ENCODE measurements at regions of chr15 and their contacts with region 1.

Region 1: GRCh38 chr15:39171944-39172368 is 408.9 kb upstream of the THBS1 start:
- DNase-seq: no peak

Region 2: GRCh38 chr15:39125904-39126303 is 46.1 kb before region 1 on chr15:
- intact Hi-C with region 1: no loop called
- DNase-seq: no peak

Region 3: GRCh38 chr15:39299486-39300267 is 127.7 kb after region 1 on chr15:
- intact Hi-C with region 1: loop called (anchors 10 kb)
- DNase-seq: no peak

Measured in cardiac septum (tissue), 1 donor.